Adrenal gland (tissue), 19 donors: ENCODE measurements at regions of chr2 and their contacts with region 1.

Region 1: DNA sequence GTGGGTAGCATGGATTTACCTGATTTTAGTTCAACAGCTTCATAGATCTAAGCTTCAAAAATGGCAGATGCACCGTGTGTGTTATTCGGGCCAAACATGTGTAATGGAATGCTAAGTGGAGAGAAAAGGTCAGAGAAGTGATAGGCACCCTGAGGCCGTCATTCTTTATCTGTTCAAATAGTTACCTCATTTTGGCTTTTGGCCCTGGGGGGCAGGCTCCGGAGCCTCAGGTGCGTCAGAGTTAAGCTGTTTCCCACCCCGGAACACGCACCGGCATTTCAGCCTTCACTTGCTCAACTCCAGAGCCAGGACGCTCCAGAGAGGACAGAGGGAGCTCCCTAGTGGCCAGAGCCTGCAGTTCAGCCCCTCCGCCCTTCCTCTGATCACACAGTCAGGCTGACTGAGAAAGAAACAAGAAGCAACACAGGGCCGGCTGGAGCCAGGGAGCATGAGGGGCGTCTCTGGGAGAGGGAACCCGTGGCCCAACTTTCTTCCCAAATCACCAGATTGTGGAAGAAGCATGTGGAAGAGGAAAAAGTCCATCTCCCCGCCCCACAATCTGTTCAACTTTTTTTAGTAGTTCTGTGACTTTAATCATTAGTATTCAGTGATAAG is 135.2 kb upstream of the EPC2 start:
- DNase-seq: peak; percentile 76 to 94 (median 88)
- H3K4me3 ChIP-seq: peak overlapping the region in 2 of 4 donors; percentile 14 to 52
- H3K27ac ChIP-seq: peak overlapping the region in 1 of 5 donors; percentile 17
- H3K4me1 ChIP-seq: peaks cover 0 to 5% of the 10 kb centered on the region in 2 donors
- H3K27me3 ChIP-seq: no peaks in the 10 kb centered on the region
- CTCF ChIP-seq: peak; percentile 79 to 95 (median 90)
- POLR2A ChIP-seq: no peak

Region 2: GRCh38 chr2:147945660-147946059 is 563.7 kb before region 1 on chr2:
- intact Hi-C with region 1: loop called in 1 of 2 experiments (anchors 10 kb)
- DNase-seq: no peak
- H3K4me3 ChIP-seq: no peak overlapping the region
- H3K27ac ChIP-seq: no peak overlapping the region
- H3K4me1 ChIP-seq: no peaks in the 10 kb centered on the region
- H3K27me3 ChIP-seq: no peaks in the 10 kb centered on the region
- CTCF ChIP-seq: no peak
- POLR2A ChIP-seq: no peak

Region 3: DNA sequence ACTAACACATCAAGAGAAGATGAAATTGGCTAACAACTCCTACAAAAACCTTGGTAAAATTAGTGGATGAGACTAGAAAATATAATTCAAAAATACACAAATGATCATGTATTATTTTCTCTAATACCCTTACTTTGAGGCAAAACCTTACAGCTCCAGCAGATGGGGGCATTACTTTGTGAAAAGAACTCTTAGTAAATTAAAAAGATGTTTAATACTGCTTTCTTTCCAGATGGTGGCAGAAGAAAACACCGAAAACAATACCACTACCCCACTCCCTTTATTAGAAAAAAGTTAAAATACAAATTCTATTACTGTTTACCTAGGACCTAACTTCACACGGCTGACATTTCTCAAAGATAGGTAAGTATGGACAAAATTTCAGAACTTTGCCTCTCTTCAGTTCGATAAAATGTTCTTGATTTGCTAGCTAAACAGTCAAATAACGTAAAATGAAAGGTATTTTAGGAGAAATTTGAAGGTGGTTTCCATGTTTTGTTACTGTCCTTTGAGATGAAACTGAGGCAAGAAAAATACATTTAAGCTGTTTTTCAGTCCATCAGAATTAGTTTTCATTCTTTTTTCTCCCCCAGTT is 519.5 kb before region 1 on chr2:
- intact Hi-C with region 1: loop called in 1 of 2 experiments (anchors 10 kb)
- DNase-seq: peak in 2 of 7 donors; percentile 29 to 44
- H3K4me3 ChIP-seq: no peak overlapping the region
- H3K27ac ChIP-seq: no peak overlapping the region
- H3K4me1 ChIP-seq: no peaks in the 10 kb centered on the region
- H3K27me3 ChIP-seq: no peaks in the 10 kb centered on the region
- CTCF ChIP-seq: peak; percentile 51 to 96 (median 74)
- POLR2A ChIP-seq: no peak

Region 4: DNA sequence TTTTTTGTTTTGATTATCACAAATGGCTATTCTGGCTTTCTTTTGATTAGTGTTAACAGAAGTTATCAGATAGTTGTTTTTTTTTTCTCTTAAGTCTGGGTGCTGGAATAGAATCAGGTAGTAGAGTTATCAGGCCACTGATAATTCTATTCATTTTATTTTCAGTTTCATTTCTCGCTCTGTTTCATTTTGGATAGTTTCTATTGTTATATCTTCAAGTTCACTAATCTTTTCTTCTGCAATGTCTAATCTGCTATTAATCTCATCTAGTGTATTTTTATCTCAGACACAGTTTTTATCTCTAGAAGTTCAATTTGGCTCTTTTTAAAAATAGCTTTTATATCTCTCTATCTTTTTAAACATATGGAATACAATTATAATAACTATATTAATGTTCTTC is 106.6 kb before region 1 on chr2:
- intact Hi-C with region 1: no loop called
- DNase-seq: no peak
- H3K4me3 ChIP-seq: no peak overlapping the region
- H3K27ac ChIP-seq: no peak overlapping the region
- H3K4me1 ChIP-seq: no peaks in the 10 kb centered on the region
- H3K27me3 ChIP-seq: no peaks in the 10 kb centered on the region
- CTCF ChIP-seq: no peak
- POLR2A ChIP-seq: no peak